Heart left ventricle (tissue), 16 donors: ENCODE measurements at regions of chr2 and their contacts with region 1.

Region 1: DNA sequence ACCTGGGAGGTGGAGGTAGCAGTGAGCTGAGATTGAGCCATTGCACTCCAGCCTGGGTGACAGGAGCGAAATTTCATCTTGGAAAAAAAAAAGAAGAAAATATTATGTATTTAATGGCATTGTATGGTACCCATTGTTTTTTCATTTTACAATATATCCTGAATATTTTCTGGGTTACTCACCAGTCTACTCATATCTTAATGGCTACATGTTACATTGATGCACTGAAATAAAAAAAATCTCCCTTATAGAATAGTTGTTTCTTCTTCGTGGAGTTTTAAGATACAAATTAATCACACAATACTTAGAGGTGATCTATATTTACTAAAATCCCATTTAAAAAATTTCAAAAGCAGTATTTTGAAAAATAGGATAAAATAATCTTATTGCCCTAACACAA is 66.3 kb upstream of the XPO1 start:
- DNase-seq: no peak
- ATAC-seq: no peak
- H3K4me3 ChIP-seq: no peak overlapping the region
- H3K27ac ChIP-seq: no peak overlapping the region
- H3K4me1 ChIP-seq: no peaks in the 10 kb centered on the region
- H3K27me3 ChIP-seq: no peaks in the 10 kb centered on the region
- CTCF ChIP-seq: no peak
- POLR2A ChIP-seq: no peak

Region 2: GRCh38 chr2:61328707-61329251 is 275.7 kb before region 1 on chr2:
- intact Hi-C with region 1: no loop called
- DNase-seq: no peak
- ATAC-seq: no peak
- H3K4me3 ChIP-seq: no peak overlapping the region
- H3K27ac ChIP-seq: no peak overlapping the region
- H3K4me1 ChIP-seq: no peaks in the 10 kb centered on the region
- H3K27me3 ChIP-seq: no peaks in the 10 kb centered on the region
- CTCF ChIP-seq: no peak
- POLR2A ChIP-seq: no peak

Region 3: DNA sequence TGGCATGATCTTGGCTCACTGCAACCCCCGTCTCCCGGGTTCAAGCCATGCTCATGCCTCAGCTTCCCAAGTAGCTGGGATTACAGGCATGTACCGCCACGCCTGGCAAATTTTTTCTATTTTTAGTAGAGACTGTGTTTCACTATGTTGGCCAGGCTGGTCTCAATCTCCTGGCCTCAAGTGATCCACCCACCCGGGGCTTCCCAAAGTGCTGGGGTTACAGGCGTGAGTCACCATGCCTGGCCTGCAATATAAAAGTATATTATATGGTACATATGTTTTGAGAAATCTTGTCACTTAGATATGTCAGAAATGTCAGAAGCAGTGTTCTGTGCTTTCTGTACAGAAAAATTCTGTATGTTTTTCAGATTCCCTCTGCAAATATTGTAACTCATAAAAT is 47.1 kb before region 1 on chr2:
- intact Hi-C with region 1: loop called in 2 of 10 experiments (anchors 2 to 5 kb)
- DNase-seq: no peak
- ATAC-seq: no peak
- H3K4me3 ChIP-seq: no peak overlapping the region
- H3K27ac ChIP-seq: no peak overlapping the region
- H3K4me1 ChIP-seq: no peaks in the 10 kb centered on the region
- H3K27me3 ChIP-seq: no peaks in the 10 kb centered on the region
- CTCF ChIP-seq: no peak
- POLR2A ChIP-seq: no peak